CD4-positive, alpha-beta T cell (primary cell): ENCODE measurements at regions of chr3 and their contacts with region 1.

Region 1: DNA sequence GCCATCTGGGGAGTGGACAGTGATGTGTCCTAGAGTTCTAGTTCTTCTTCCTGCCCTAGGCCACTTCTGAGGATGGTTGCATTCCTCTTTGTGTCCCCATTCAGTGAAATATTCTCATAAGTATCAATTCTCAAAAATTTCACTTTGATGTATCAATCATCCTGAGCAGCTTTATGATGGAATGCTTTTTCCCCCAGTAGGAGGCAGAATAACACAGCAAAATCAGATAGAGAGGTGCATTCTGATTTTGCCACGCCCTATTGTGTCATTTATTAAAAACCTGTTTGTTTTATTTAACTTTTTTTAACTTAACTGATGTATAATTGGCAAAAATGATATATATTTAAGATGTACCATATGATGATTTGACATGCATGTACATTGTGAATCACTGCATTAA is 656.0 kb upstream of the GRM7 start:
- DNase-seq: no peak
- ATAC-seq: no peak
- H3K4me3 ChIP-seq: no peak overlapping the region
- H3K4me3 Mint-ChIP-seq: no peak overlapping the region
- H3K27ac ChIP-seq: no peak overlapping the region
- H3K27ac Mint-ChIP-seq: no peak overlapping the region
- H3K4me1 ChIP-seq: no peaks in the 10 kb centered on the region
- H3K4me1 Mint-ChIP-seq: no peaks in the 10 kb centered on the region
- H3K27me3 ChIP-seq: no peaks in the 10 kb centered on the region
- H3K27me3 Mint-ChIP-seq: no peaks in the 10 kb centered on the region
- CTCF ChIP-seq: no peak

Region 2: DNA sequence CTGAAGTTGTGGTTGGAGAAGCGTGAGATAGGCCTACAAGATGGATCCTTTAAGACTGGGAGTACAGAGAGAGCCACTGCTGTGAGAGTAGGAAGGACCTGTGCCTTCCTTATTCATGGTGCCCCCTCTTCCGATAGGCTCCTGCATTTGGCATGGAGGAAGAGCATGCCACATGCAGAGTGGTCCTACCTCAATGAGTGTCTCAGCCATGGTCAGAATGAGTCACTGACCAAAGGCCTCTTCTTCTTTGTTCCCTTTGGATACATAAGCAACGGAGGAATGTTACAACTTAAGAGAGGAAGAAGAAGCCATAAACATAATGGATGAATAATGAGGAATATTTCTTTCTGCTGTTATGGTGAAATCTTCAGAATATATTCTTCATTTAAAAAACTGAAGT is 25.1 kb before region 1 on chr3:
- CTCF ChIA-PET with region 1: no interaction called
- POLR2A ChIA-PET with region 1: no interaction called
- intact Hi-C with region 1: loop called in 1 of 2 experiments (anchors 2 kb)
- DNase-seq: no peak
- ATAC-seq: no peak
- H3K4me3 ChIP-seq: no peak overlapping the region
- H3K4me3 Mint-ChIP-seq: no peak overlapping the region
- H3K27ac ChIP-seq: no peak overlapping the region
- H3K27ac Mint-ChIP-seq: no peak overlapping the region
- H3K4me1 ChIP-seq: no peaks in the 10 kb centered on the region
- H3K4me1 Mint-ChIP-seq: no peaks in the 10 kb centered on the region
- H3K27me3 ChIP-seq: no peaks in the 10 kb centered on the region
- H3K27me3 Mint-ChIP-seq: no peaks in the 10 kb centered on the region
- CTCF ChIP-seq: no peak